Activated CD8-positive, alpha-beta memory T cell treated with anti-CD3 and anti-CD28 coated beads, Interleukin-2, amount 10 ng/mL, durations not matched to agents 7 days and 5 days (primary cell): ENCODE measurements at regions of chr17 and their contacts with region 1.

Region 1: GRCh38 chr17:82553210-82553930 is 33.8 kb downstream of the FOXK2 start:
- DNase-seq: no peak
- ATAC-seq: no peak
- H3K4me3 Mint-ChIP-seq: no peak overlapping the region
- H3K27ac Mint-ChIP-seq: no peak overlapping the region
- H3K4me1 Mint-ChIP-seq: peaks cover 24% of the 10 kb centered on the region
- H3K27me3 Mint-ChIP-seq: no peaks in the 10 kb centered on the region

Region 2: GRCh38 chr17:82077617-82078358 is 475.6 kb before region 1 on chr17:
- CTCF ChIA-PET with region 1: no interaction called
- DNase-seq: no peak
- ATAC-seq: no peak
- H3K4me3 Mint-ChIP-seq: no peak overlapping the region
- H3K27ac Mint-ChIP-seq: no peak overlapping the region
- H3K4me1 Mint-ChIP-seq: no peaks in the 10 kb centered on the region
- H3K27me3 Mint-ChIP-seq: peaks cover 7% of the 10 kb centered on the region

Region 3: GRCh38 chr17:82518826-82519810 is 34.3 kb before region 1 on chr17 and contains the start of gene FOXK2:
- CTCF ChIA-PET with region 1: interaction called, 15 read pairs
- DNase-seq: peak; percentile 95
- ATAC-seq: peak; percentile 98
- H3K4me3 Mint-ChIP-seq: peak within 1 kb of the TSS; percentile 91
- H3K27ac Mint-ChIP-seq: peak within 1 kb of the TSS; percentile 86
- H3K4me1 Mint-ChIP-seq: peaks cover 23% of the 10 kb centered on the region
- H3K27me3 Mint-ChIP-seq: no peaks in the 10 kb centered on the region
- total RNA-seq, gene FOXK2: 81.7 to 85.1 TPM

Region 4: DNA sequence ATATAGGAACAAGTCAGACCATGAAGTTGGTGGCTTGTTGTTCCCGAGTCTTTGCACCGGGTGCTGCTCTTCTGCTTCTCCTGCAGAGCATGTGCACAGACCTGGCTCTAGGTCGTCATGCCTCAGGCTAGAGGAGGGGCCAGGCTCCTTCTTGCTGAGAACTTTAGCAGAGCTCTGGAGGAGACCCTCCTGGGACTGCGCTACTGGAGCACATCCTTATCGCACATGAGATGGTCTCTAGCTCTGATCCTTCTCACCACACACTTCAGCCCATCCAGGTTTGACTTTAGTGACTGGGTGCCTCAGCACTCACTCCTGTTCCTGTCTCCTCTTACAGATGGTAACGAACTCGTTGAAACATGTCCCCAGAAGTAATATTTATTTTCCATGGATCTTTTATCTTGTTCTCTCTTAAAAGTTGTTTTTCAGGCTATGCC is 19.0 kb before region 1 on chr17:
- CTCF ChIA-PET with region 1: interaction called, 16 read pairs
- DNase-seq: no peak
- ATAC-seq: no peak
- H3K4me3 Mint-ChIP-seq: no peak overlapping the region
- H3K27ac Mint-ChIP-seq: no peak overlapping the region
- H3K4me1 Mint-ChIP-seq: peaks cover 52% of the 10 kb centered on the region
- H3K27me3 Mint-ChIP-seq: no peaks in the 10 kb centered on the region

Region 5: DNA sequence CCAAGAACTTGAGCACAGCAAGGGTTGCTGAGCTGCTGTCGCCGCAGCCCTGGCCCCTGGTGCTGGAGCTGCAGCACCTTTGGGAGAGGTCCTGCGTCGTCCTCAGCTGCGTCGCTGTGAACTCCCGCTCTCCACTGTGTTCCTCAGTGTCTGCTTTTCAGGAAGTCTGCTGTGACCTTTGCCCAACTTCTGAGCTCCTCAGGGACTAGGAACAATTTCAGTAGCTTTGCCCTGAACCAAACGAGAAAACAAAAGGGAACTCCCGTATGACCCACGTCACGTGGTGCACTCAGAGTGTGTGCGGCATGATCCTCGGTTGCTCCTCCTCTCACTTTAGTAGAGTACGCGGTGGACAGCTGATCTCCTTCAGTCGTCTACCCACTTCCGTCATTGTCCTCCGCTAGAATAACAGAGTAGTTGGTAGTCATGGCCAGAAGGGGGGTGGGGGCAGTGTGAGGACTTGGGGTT is 50.6 kb after region 1 on chr17:
- CTCF ChIA-PET with region 1: no interaction called
- DNase-seq: no peak
- ATAC-seq: peak; percentile 71
- H3K4me3 Mint-ChIP-seq: no peak overlapping the region
- H3K27ac Mint-ChIP-seq: peak overlapping the region; percentile 41
- H3K4me1 Mint-ChIP-seq: peaks cover 15% of the 10 kb centered on the region
- H3K27me3 Mint-ChIP-seq: no peaks in the 10 kb centered on the region